Heart right ventricle (tissue), 16 donors: ENCODE measurements at regions of chr17 and their contacts with region 1.

Region 1: DNA sequence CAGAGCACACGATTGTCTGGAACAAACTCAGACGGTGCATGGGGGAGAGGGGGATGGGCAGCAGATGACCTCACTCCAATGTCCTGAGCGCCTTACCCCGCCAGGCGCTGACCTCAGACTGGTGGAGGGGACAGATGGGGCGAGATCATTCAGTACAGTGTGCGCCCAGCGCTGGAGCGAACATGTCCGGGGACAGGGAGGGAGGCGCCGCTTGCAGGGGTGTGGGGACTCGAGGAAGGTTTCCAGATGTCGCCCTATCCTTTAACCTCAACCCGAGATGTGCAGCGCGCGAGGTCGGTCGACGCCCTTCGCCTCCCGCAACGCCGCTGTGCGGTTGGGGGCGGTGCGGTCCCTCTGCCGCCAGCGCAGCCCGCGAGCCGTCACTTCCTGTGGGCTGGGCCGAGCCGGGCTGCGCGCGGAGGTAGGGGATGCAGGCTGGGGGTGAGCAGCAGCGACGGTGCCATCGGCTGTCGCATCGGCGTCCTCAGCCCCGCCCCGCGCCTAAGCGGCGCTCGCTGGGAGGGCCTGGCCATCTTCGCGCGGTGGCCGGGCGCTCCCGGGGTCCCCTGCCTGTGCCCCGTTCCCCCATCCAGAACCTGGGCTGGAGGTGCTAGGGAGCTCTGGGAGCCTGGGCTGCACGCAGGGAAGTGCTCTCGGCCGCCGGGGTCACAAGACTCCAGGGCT is 5.3 kb upstream of the CDR2L start:
- DNase-seq: peak; percentile 73 to 81
- ATAC-seq: peak; percentile 93 to 96 (median 95)
- H3K4me3 ChIP-seq: peak overlapping the region; percentile 40 to 79 (median 68)
- H3K27ac ChIP-seq: peak overlapping the region; percentile 76 to 96 (median 92)
- H3K4me1 ChIP-seq: peaks cover 4 to 30% (median 20%) of the 10 kb centered on the region in 9 donors
- H3K27me3 ChIP-seq: peaks cover 0 to 27% (median 0%) of the 10 kb centered on the region in 7 donors
- CTCF ChIP-seq: peak in 5 of 9 donors; percentile 7 to 34 (median 25)

Region 2: DNA sequence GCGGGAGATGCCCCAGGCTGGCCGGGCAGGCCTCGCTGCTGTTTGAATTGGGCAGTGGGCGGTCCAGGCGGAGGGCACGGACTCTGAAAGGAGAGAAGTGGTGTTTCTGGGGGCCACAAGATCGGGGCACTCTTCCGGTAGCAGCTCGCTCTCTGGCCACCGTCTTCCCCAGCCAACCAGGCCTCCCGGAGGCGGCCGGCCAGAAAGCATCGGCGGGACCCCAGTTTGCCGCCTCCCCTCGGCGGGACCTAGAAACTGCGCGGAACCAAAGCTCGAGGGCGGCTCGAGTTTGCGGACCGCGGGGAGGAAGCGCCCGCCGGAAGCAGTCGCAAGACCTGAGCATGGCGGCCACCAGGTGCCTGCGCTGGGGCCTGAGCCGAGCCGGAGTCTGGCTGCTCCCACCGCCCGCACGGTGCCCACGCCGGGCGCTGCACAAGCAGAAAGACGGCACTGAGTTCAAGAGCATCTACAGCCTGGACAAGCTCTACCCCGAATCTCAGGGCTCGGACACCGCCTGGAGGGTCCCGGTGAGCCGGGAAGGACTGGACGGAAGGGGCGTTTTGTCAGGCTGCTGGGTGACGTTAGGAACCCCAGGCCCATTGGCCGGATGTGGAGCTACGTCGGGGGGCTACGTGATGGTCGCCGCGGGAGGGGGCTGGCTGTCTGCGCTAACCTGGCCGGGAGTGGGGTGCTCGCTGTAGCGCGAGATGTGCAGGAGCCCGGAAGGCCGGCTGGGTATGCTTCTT is 30.4 kb after region 1 on chr17 and contains the start of gene MRPL58:
- intact Hi-C with region 1: loop called in 2 of 10 experiments (anchors 2 kb)
- DNase-seq: peak; percentile 84 to 85
- ATAC-seq: peak; percentile 90 to 94 (median 92)
- H3K4me3 ChIP-seq: peak within 1 kb of the TSS; percentile 73 to 97 (median 90)
- H3K27ac ChIP-seq: peak within 1 kb of the TSS; percentile 87 to 96 (median 92)
- H3K4me1 ChIP-seq: peaks cover 12 to 35% (median 28%) of the 10 kb centered on the region in 9 donors
- H3K27me3 ChIP-seq: no peaks in the 10 kb centered on the region
- CTCF ChIP-seq: peak in 8 of 9 donors; percentile 28 to 72 (median 59)
- total RNA-seq, gene MRPL58: 43.7 to 64.1 (median 51.7) TPM

Region 3: GRCh38 chr17:75034236-75034908 is 52.3 kb after region 1 on chr17:
- intact Hi-C with region 1: loop called in 2 of 10 experiments (anchors 5 to 10 kb)
- DNase-seq: peak; percentile 81 to 90
- ATAC-seq: peak; percentile 68 to 87 (median 80)
- H3K4me3 ChIP-seq: peak overlapping the region; percentile 46 to 72 (median 66)
- H3K27ac ChIP-seq: peak overlapping the region; percentile 8 to 90 (median 84)
- H3K4me1 ChIP-seq: peaks cover 0 to 54% (median 44%) of the 10 kb centered on the region in 9 donors
- H3K27me3 ChIP-seq: no peaks in the 10 kb centered on the region
- CTCF ChIP-seq: peak in 1 of 9 donors; percentile 8